ENCODE measurements at regions of chr1 and their contacts with region 1.

Region 1: DNA sequence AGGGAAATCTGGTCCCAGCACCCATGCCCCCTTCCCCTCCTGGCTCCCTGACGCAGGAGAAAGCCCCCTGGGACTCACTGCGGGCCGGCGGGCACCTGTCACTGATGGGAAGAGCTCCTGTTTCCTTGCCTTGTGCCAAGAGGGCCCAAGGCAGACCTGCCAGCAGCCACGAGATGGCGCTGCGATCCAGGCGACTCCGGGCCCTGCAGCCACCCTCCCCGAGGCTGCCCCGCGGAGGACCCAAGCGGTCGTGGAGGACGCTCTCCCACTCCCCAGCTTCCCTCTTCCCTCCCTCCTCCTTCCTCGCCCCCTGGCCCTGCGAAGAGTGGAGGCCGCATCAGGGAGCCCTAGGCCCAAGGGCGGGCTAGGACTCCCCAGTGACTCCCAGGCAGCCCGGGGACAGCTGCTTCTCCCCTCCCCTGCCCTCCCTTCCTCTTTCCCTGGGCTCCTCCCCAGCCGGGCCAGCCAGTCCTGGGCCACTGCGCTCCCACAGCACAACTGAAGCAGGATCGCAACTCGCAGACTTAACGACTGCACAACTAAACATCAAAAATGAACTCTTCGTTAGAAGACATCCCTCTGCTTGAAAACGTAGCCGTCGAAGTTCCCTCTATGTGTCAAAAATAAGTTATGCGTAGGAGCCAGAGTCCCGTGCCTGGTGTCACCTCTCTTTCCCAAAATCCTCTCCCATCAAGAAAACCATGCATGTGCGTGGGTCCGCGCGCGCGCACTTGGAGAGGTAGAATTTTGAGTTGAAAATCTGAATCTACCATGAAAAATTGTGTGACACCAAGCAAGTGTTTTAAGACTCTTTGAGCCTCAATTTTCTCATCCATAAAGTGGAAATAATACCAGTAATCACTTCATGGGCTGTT is 34.2 kb downstream of the BATF3 start:
- DNase-seq: peak; percentile 85
- H3K4me3 Mint-ChIP-seq: peak overlapping the region; percentile 74
- H3K27ac Mint-ChIP-seq: peak overlapping the region; percentile 71
- H3K4me1 Mint-ChIP-seq: peaks cover 47% of the 10 kb centered on the region
- H3K27me3 Mint-ChIP-seq: peaks cover 9% of the 10 kb centered on the region

Region 2: GRCh38 chr1:212447478-212447877 is 218.0 kb before region 1 on chr1:
- CTCF ChIA-PET with region 1: no interaction called
- POLR2A ChIA-PET with region 1: no interaction called
- DNase-seq: no peak
- H3K4me3 Mint-ChIP-seq: no peak overlapping the region
- H3K27ac Mint-ChIP-seq: no peak overlapping the region
- H3K4me1 Mint-ChIP-seq: no peaks in the 10 kb centered on the region
- H3K27me3 Mint-ChIP-seq: no peaks in the 10 kb centered on the region

Region 3: DNA sequence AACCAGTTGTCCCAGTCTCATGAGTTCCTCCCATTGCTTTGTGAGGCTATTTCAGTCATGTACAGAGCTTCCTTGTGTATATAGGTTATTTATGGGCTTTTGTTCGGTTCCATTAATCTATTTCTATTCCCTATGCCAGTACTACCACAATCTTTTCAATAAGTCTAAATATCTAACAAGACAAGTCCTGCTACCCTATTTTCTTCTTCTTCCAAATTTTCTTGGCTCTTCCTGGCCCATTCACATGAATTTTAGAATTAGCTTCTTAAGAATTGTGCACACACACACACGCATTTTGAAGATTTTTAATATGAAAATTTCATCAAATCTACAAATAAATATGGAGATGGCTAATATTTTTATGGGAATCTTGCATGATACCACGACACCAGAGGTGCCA is 90.7 kb before region 1 on chr1:
- CTCF ChIA-PET with region 1: no interaction called
- POLR2A ChIA-PET with region 1: no interaction called
- DNase-seq: no peak
- H3K4me3 Mint-ChIP-seq: no peak overlapping the region
- H3K27ac Mint-ChIP-seq: no peak overlapping the region
- H3K4me1 Mint-ChIP-seq: no peaks in the 10 kb centered on the region
- H3K27me3 Mint-ChIP-seq: peaks cover 29% of the 10 kb centered on the region

Region 4: GRCh38 chr1:212586206-212587015 is 79.1 kb before region 1 on chr1:
- CTCF ChIA-PET with region 1: no interaction called
- POLR2A ChIA-PET with region 1: no interaction called
- DNase-seq: no peak
- H3K4me3 Mint-ChIP-seq: no peak overlapping the region
- H3K27ac Mint-ChIP-seq: no peak overlapping the region
- H3K4me1 Mint-ChIP-seq: no peaks in the 10 kb centered on the region
- H3K27me3 Mint-ChIP-seq: peaks cover 34% of the 10 kb centered on the region

Region 5: GRCh38 chr1:212650228-212650627 is 15.2 kb before region 1 on chr1:
- CTCF ChIA-PET with region 1: interaction called, 11 read pairs
- POLR2A ChIA-PET with region 1: no interaction called
- DNase-seq: no peak
- H3K4me3 Mint-ChIP-seq: no peak overlapping the region
- H3K27ac Mint-ChIP-seq: no peak overlapping the region
- H3K4me1 Mint-ChIP-seq: no peaks in the 10 kb centered on the region
- H3K27me3 Mint-ChIP-seq: peaks cover 7% of the 10 kb centered on the region

Region 6: GRCh38 chr1:212738330-212738729 is 72.9 kb after region 1 on chr1:
- CTCF ChIA-PET with region 1: interaction called, 19 read pairs
- POLR2A ChIA-PET with region 1: interaction called, 4 read pairs
- DNase-seq: no peak
- H3K4me3 Mint-ChIP-seq: peak overlapping the region; percentile 19
- H3K27ac Mint-ChIP-seq: peak overlapping the region; percentile 88
- H3K4me1 Mint-ChIP-seq: peaks cover 43% of the 10 kb centered on the region
- H3K27me3 Mint-ChIP-seq: no peaks in the 10 kb centered on the region

Region 7: DNA sequence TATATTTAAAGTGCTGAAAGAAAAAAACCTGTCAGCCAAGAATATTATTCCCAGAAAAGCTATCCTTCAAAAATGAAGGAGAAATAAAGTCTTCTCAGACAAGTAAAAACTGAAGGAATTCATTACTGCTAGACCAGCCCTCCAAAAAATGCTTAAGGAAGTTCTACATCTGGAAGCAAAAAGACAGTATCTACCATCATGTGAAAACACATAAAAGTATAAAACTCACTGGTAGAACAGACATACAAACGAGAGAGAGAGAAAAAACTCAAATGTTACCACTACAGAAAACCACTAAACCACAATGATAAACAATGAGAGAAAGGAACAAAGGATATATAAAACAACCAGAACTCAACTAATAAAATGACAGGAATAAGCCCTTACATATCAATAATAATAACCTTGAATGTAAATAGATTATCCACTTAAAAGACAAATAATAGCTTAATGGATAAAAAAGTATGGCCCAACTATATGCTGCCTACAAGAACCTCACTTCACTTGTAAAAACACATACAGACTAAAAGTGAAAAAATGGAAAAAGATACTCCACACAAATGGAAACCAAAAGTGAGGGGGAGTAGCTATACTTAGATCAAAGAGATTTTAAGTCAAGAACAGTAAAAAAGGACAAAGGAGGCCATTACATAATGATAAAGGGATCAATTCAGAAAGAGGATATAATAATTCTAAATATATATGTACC is 104.1 kb after region 1 on chr1:
- CTCF ChIA-PET with region 1: interaction called, 11 read pairs
- POLR2A ChIA-PET with region 1: interaction called, 8 read pairs
- DNase-seq: no peak
- H3K4me3 Mint-ChIP-seq: peak overlapping the region; percentile 8
- H3K27ac Mint-ChIP-seq: peak overlapping the region; percentile 10
- H3K4me1 Mint-ChIP-seq: peaks cover 40% of the 10 kb centered on the region
- H3K27me3 Mint-ChIP-seq: no peaks in the 10 kb centered on the region

Region 8: DNA sequence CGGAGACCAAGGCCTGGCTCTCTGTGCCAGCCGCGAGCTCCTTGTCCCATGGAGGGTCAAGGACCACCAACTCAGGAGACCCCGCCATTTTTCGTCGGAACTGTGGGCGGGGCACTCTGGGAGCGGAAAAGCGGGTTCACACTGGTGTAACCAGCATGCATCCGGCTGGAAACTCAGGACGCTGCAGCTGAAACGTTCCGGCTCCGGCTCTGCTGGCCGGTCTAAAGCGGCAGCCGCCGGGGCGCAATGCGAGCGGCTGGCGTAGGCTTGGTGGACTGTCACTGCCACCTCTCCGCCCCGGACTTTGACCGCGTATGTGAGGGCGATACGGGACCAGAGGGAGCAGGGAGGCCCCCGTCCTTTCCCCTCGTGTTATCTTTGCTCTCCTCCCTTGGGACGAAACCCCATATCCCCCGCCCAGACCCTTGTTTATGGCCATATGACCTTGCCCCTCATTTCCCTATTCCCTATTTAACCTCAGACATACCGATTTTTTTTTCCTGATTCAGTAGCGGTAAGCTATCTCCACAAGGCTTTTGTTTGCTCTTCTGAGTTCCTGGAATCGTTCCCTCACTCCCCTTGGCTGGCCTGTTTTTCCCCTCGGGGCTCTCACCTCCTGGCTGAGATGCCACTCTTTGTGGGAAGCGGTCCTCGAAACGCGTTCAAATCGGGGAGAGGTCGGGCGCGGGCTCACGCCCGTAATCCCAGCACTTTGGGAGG is 126.4 kb after region 1 on chr1 and contains the starts of genes NSL1 and TATDN3:
- CTCF ChIA-PET with region 1: interaction called, 90 read pairs
- POLR2A ChIA-PET with region 1: interaction called, 4 read pairs
- DNase-seq: peak; percentile 94
- H3K4me3 Mint-ChIP-seq: peak within 1 kb of the TSS; percentile 100
- H3K27ac Mint-ChIP-seq: peak within 1 kb of the TSS; percentile 95
- H3K4me1 Mint-ChIP-seq: peaks cover 49% of the 10 kb centered on the region
- H3K27me3 Mint-ChIP-seq: no peaks in the 10 kb centered on the region
- total RNA-seq, gene NSL1: 36.4 to 38.1 TPM
- total RNA-seq, gene TATDN3: 18.6 to 20.2 TPM